Activated CD4-positive, alpha-beta memory T cell treated with anti-CD3 and anti-CD28 coated beads, Interleukin-2, amount 10 ng/mL, durations not matched to agents 7 days and 5 days (primary cell): ENCODE measurements at regions of chr12 and their contacts with region 1.

Region 1: DNA sequence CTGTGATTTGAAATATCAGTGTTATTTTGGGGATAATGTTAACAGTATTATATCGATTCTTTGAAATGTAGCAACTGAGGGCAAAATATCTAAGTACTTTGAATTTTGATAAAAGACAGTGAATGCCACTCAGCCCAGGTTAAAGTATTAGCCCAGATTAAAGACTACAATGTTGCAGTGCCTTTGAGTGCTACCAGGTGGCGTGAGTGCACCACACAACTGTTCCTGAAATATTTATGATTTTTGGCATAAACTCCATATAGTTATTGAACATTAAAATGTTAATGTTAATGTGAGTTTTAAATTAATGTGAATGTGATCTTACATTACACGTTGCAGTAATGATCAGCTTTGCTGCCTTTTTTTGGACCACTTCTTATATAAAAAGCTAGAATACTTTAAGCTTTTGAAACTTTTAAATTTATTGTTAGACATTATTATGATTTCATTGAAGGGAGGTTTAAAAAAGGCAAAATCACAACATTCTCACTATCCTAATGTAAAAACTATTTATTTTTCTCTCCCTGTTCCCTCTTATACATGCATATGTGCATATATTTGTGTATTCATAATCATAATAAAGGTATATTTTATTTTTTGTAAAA is 22.5 kb downstream of the MRPS35 start:
- DNase-seq: peak; percentile 34
- H3K4me3 Mint-ChIP-seq: no peak overlapping the region
- H3K27ac Mint-ChIP-seq: no peak overlapping the region
- H3K4me1 Mint-ChIP-seq: no peaks in the 10 kb centered on the region
- H3K27me3 Mint-ChIP-seq: no peaks in the 10 kb centered on the region

Region 2: GRCh38 chr12:27592548-27592947 is 140.6 kb before region 1 on chr12:
- CTCF ChIA-PET with region 1: no interaction called
- POLR2A ChIA-PET with region 1: no interaction called
- DNase-seq: no peak
- H3K4me3 Mint-ChIP-seq: no peak overlapping the region
- H3K27ac Mint-ChIP-seq: no peak overlapping the region
- H3K4me1 Mint-ChIP-seq: peaks cover 12% of the 10 kb centered on the region
- H3K27me3 Mint-ChIP-seq: peaks cover 3% of the 10 kb centered on the region

Region 3: GRCh38 chr12:27940756-27941402 is 207.7 kb after region 1 on chr12:
- CTCF ChIA-PET with region 1: interaction called, 36 read pairs
- POLR2A ChIA-PET with region 1: no interaction called
- DNase-seq: peak; percentile 75
- H3K4me3 Mint-ChIP-seq: no peak overlapping the region
- H3K27ac Mint-ChIP-seq: no peak overlapping the region
- H3K4me1 Mint-ChIP-seq: no peaks in the 10 kb centered on the region
- H3K27me3 Mint-ChIP-seq: peaks cover 19% of the 10 kb centered on the region